MCF 10A (cell line): ENCODE measurements at regions of chrX and their contacts with region 1.

Region 1: DNA sequence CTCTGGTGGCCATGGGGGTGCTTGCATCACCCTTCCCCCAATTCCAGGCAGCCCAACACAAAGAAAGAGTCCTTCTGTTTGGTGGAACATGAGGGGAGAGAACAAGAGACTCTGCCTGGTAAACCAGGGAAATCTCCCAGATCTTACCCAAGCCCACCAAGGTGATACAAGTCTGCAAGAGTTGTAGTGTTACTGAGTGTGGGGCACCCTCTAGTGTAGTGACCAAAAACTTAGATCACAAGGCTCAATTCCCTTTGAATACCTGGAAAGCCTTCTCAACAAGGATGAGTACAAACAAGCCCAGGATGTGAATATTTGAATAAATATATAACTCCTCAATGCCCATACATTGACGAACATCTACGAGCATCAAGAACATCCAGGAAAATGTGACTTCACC is 64.7 kb downstream of the IL13RA2 start:
- DNase-seq: no peak
- H3K4me3 Mint-ChIP-seq: no peak overlapping the region
- H3K27ac Mint-ChIP-seq: no peak overlapping the region
- H3K4me1 Mint-ChIP-seq: no peaks in the 10 kb centered on the region
- H3K27me3 Mint-ChIP-seq: peaks cover 51% of the 10 kb centered on the region
- CTCF ChIP-seq: no peak

Region 2: DNA sequence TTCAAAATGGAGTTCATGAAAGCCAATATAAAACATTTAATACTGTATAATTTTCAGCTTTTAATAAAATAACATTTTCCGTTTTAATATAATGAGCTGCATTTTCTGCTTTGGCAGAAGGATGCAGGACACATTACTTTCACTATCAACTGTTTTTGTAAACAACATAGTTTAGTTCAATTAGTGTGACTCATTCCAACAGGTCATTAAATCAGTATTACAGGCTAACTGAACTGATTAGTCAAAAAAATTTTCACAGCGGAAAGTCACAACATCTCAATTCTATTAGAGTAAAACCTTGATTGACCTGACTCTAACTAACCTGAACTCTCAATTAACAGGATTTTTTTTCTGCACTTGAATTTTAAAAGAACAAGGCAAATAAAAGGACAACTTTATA is 1960.9 kb before region 1 on chrX:
- CTCF ChIA-PET with region 1: no interaction called
- POLR2A ChIA-PET with region 1: no interaction called
- intact Hi-C with region 1: no loop called
- DNase-seq: no peak
- H3K4me3 Mint-ChIP-seq: no peak overlapping the region
- H3K27ac Mint-ChIP-seq: no peak overlapping the region
- H3K4me1 Mint-ChIP-seq: no peaks in the 10 kb centered on the region
- H3K27me3 Mint-ChIP-seq: peaks cover 27% of the 10 kb centered on the region
- CTCF ChIP-seq: no peak

Region 3: GRCh38 chrX:114472788-114473187 is 479.9 kb before region 1 on chrX:
- CTCF ChIA-PET with region 1: no interaction called
- POLR2A ChIA-PET with region 1: no interaction called
- intact Hi-C with region 1: no loop called
- DNase-seq: no peak
- H3K4me3 Mint-ChIP-seq: no peak overlapping the region
- H3K27ac Mint-ChIP-seq: no peak overlapping the region
- H3K4me1 Mint-ChIP-seq: no peaks in the 10 kb centered on the region
- H3K27me3 Mint-ChIP-seq: peaks cover 56% of the 10 kb centered on the region
- CTCF ChIP-seq: no peak

Region 4: DNA sequence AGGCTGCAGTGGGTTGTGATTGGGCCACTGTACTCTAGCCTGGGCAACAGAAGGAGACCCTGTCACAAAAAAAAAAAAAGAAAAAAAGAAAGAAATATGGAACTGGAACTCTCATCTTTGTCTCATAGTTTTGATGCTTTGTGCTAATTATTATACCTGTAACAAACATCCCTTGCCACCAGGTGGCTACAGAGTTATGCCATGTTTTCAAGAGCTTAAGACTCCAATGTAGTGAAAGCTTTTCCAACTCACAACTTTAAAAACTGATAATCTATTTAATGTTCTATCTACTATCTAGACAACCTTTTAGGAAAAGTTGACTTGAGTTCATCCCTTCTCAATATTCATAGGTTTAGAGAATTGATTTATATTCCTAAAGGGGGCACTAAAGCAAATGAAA is 326.4 kb before region 1 on chrX:
- CTCF ChIA-PET with region 1: interaction called, 35 read pairs
- POLR2A ChIA-PET with region 1: no interaction called
- intact Hi-C with region 1: no loop called
- DNase-seq: peak; percentile 41
- H3K4me3 Mint-ChIP-seq: no peak overlapping the region
- H3K27ac Mint-ChIP-seq: no peak overlapping the region
- H3K4me1 Mint-ChIP-seq: no peaks in the 10 kb centered on the region
- H3K27me3 Mint-ChIP-seq: peaks cover 52% of the 10 kb centered on the region
- CTCF ChIP-seq: peak; percentile 46